Gastrocnemius medialis (tissue), 4 donors: ENCODE measurements at regions of chrX and their contacts with region 1.

Region 1: DNA sequence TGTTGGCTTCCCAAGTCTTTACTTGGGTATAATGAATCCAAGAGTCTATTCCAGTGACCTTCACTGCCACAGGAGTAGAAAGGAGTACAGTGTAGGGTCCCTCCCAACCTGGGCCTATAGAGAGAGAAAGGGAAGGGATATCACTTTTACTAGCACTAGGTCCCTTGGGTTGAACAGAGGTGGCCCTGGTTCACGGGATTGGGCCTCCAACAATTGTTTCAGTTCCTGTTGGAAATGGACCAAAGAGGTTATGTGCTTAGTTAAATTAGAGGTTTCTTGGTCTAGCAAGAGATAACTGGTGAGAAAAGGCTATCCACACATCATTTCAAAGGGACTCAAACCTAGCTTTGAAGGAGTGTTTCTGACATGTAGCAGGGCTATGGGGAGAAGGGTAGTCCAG is 57.1 kb upstream of the MED14 start:
- DNase-seq: no peak
- ATAC-seq: no peak
- H3K4me3 ChIP-seq: no peak overlapping the region
- H3K27ac ChIP-seq: no peak overlapping the region
- H3K4me1 ChIP-seq: peaks cover 0 to 6% of the 10 kb centered on the region in 2 donors
- H3K27me3 ChIP-seq: no peaks in the 10 kb centered on the region
- CTCF ChIP-seq: no peak
- POLR2A ChIP-seq: no peak

Region 2: DNA sequence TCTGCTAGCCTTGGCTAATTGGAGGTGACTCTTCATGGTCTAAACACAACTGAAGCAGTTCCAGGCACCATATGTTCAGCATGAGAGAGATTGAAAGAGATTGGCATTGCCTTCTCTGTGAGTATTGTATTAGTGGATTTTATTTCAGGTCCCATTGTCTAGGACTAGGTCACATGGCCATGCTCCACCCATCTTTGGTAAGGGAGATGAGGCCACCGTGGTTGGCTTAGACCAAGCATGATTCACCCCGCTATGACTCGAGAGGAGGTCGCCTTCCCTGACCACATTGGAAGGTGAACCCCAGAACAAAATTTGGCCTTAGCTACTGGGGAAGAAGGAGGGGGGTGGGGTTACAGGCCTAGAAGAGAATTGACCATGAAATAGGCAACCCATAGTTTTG is 584.8 kb before region 1 on chrX:
- in situ Hi-C with region 1: no loop called
- intact Hi-C with region 1: no loop called
- DNase-seq: no peak
- ATAC-seq: no peak
- H3K4me3 ChIP-seq: no peak overlapping the region
- H3K27ac ChIP-seq: no peak overlapping the region
- H3K4me1 ChIP-seq: no peaks in the 10 kb centered on the region
- H3K27me3 ChIP-seq: no peaks in the 10 kb centered on the region
- CTCF ChIP-seq: no peak
- POLR2A ChIP-seq: no peak

Region 3: DNA sequence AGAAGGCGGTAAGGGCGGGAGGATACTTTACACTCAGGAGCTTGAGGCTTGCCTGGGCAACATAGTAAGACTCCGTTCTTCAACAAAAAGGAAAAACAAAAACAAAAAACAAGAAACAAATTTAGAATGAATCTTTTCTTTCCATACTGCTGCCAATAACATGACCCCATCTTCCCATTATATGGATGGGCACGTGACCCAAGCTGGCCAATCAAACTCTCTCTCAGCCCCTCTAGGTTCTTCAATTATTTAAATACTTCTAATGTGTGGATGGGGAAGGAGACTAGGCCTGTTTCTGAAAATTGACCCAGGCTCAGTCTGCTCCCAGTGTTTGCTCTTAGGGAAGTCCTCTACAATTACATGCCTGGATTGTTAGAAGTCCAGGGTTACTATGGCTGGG is 233.8 kb before region 1 on chrX:
- in situ Hi-C with region 1: no loop called
- intact Hi-C with region 1: no loop called
- DNase-seq: no peak
- ATAC-seq: no peak
- H3K4me3 ChIP-seq: no peak overlapping the region
- H3K27ac ChIP-seq: no peak overlapping the region
- H3K4me1 ChIP-seq: no peaks in the 10 kb centered on the region
- H3K27me3 ChIP-seq: peaks cover 0 to 15% (median 4%) of the 10 kb centered on the region in 3 donors
- CTCF ChIP-seq: no peak
- POLR2A ChIP-seq: no peak

Region 4: DNA sequence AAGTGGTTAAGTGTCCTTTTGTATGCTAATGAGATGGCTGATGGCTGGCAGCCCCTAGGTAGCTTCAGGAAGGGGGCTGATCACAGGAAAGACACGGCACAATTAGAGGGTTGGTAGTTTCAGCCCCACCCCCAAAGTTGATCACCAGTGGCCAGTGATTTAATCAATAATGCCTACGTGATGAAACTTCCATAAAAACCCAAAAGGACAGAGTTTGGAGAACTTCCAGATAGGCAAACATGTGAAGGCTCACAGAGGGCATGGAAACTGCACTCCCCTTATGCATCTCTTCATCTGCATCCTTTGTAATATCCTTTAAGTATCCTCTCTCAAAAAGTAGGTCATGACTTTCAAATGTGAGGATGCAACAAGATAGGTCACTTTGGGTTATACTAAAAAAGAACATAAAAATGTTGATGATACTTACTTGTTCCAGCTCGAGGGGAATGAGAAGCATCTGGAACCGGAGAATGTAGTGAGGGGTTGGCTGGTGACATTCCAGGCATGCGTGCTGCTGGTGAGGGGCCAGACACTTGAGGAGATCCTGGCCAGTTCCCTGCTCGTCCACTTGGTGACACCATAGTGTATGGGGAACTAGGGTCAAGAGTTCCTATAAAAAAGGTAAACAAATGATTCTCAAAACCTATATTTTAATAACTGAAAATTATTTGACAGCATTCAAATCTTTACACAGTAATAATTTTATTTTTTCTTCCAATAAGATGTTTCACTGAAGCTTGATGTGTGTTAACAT is 128.4 kb before region 1 on chrX:
- in situ Hi-C with region 1: loop called in 3 of 4 experiments (anchors 10 kb)
- intact Hi-C with region 1: no loop called
- DNase-seq: peak in 1 of 2 donors; percentile 24
- ATAC-seq: peak in 1 of 2 donors; percentile 69
- H3K4me3 ChIP-seq: no peak overlapping the region
- H3K27ac ChIP-seq: peak overlapping the region; percentile 6 to 54 (median 23)
- H3K4me1 ChIP-seq: no peaks in the 10 kb centered on the region
- H3K27me3 ChIP-seq: peaks cover 0 to under 1% (median 0%) of the 10 kb centered on the region in 3 donors
- CTCF ChIP-seq: peak in 4 of 5 experiments; percentile 22 to 62 (median 32)
- POLR2A ChIP-seq: no peak

Region 5: DNA sequence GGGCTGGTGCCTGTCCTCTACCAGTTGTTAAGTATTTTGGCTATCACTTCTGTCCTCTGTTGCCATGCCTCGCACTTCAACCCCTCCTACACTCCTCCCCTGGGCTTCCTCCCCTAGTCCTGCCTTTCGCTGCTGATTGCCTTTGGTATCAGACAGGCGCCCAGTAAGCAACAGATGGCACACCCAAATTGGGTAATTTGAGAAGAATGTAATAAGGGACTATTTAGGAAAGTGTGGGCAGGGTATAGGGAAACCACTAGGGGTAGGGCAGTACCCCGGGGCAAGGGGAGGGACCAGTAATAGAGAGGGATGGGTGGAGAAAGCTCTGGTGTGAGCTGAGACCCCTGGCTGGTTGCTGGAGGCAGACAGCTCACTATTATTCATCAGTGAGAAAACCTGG is 120.1 kb after region 1 on chrX:
- in situ Hi-C with region 1: no loop called
- intact Hi-C with region 1: no loop called
- DNase-seq: no peak
- ATAC-seq: no peak
- H3K4me3 ChIP-seq: no peak overlapping the region
- H3K27ac ChIP-seq: no peak overlapping the region
- H3K4me1 ChIP-seq: no peaks in the 10 kb centered on the region
- H3K27me3 ChIP-seq: peaks cover 0 to 4% (median 0%) of the 10 kb centered on the region in 3 donors
- CTCF ChIP-seq: no peak
- POLR2A ChIP-seq: no peak